ENCODE measurements at regions of chr2 and their contacts with region 1.

Region 1: GRCh38 chr2:14178780-14179179 is 453.7 kb upstream of the LRATD1 start:
- DNase-seq: no peak
- ATAC-seq: no peak
- H3K4me3 ChIP-seq: no peak overlapping the region
- H3K27ac ChIP-seq: no peak overlapping the region
- H3K4me1 ChIP-seq: no peaks in the 10 kb centered on the region
- H3K27me3 ChIP-seq: no peaks in the 10 kb centered on the region
- CTCF ChIP-seq: no peak

Region 2: DNA sequence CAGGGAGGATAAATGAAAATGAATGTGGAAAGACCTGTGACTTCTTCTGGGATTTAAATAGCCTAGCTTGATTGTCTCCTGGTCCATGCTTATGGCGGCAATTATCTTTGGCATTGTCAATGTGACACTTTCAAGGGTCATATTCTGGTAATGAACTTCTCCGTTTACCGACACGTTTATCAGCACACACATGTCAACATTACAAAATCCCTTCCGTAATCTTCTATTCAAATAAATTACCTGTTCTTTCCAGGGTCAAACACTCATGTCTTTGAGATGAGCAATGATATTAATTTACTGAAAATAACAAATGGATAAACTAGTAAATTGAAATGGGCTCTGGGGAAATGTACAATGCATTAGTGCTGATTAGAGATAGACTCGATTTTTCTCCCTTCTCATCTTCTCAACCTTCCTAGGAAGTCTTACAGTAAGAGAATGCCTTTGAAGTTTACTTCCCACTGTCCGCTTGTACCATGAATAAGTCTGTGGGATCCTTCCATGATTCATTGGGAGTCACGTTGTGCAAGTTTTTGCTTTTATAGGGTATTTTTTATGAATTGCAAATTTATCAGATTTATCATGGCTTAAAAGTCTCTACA is 192.6 kb before region 1 on chr2:
- intact Hi-C with region 1: no loop called
- DNase-seq: no peak
- ATAC-seq: no peak
- H3K4me3 ChIP-seq: no peak overlapping the region
- H3K27ac ChIP-seq: no peak overlapping the region
- H3K4me1 ChIP-seq: no peaks in the 10 kb centered on the region
- H3K27me3 ChIP-seq: no peaks in the 10 kb centered on the region
- CTCF ChIP-seq: no peak

Region 3: DNA sequence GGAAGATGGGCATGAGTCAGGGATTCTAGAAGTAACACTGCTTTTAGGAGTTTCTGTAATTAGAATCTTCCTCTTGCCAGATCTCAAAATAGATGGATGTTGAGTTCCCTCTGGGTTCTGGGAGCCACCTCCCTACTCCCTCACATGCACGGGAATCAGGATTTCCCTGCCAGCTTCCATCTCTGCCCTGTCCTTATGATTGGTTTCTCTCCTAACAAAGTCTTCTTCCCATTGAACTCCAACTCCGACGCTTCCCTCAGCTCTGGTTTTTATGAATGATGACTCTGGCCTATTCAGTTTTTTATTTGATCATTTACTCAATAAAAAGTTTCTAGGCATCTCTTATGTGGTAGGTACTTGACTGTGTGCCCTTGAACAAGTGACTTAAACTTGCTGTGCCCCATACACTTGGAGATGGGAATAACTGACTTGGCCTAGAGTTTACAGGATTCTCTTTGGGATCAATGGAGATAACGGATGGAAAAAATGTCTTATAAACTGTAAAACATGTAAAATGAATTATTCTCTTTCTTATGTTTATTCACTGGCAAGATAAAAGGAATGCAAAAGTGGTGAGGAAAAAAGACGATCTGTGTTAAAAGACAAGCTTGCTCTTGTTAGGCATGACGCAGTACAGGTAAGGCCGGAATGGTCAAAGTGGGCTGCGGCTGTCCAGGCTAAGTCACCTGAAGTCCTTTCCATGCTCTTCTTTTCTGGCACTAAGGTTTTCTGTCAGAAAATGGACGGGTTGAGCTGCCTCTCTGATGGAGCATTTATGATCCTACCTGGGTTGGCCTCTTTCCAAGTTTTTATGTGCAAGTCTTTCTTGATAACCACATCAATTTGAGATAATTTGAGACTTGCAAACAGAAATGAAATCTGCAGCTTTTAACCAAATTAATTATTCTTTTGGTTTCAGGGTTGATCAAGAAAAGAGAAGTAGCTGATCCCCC is 1961.2 kb after region 1 on chr2:
- intact Hi-C with region 1: loop called in 1 of 10 experiments (anchors 10 kb)
- DNase-seq: no peak
- ATAC-seq: no peak
- H3K4me3 ChIP-seq: no peak overlapping the region
- H3K27ac ChIP-seq: no peak overlapping the region
- H3K4me1 ChIP-seq: no peaks in the 10 kb centered on the region
- H3K27me3 ChIP-seq: no peaks in the 10 kb centered on the region
- CTCF ChIP-seq: no peak

Measured in heart right ventricle (tissue), 16 donors.